ENCODE measurements at regions of chr19 and their contacts with region 1.

Region 1: GRCh38 chr19:17947815-17948513 is 15.1 kb downstream of the CCDC124 start:
- DNase-seq: peak; percentile 91 to 99 (median 95)
- ATAC-seq: peak; percentile 87
- H3K4me3 ChIP-seq: peak overlapping the region; percentile 41
- H3K4me3 Mint-ChIP-seq: peak overlapping the region; percentile 68 to 88 (median 82)
- H3K27ac ChIP-seq: peak overlapping the region; percentile 99
- H3K27ac Mint-ChIP-seq: peak overlapping the region in 7 of 9 donors; percentile 48 to 96 (median 87)
- H3K4me1 ChIP-seq: peaks cover 37 to 50% of the 10 kb centered on the region in 2 donors
- H3K4me1 Mint-ChIP-seq: peaks cover 22 to 55% (median 43%) of the 10 kb centered on the region in 7 donors
- H3K27me3 ChIP-seq: peaks cover 18 to 28% of the 10 kb centered on the region in 2 donors
- H3K27me3 Mint-ChIP-seq: peaks cover 27 to 43% (median 30%) of the 10 kb centered on the region in 5 donors

Region 2: GRCh38 chr19:17967257-17968051 is 19.5 kb after region 1 on chr19:
- CTCF ChIA-PET with region 1: no interaction called
- POLR2A ChIA-PET with region 1: no interaction called
- intact Hi-C with region 1: loop called in 1 of 2 experiments (anchors 2 kb)
- DNase-seq: no peak
- ATAC-seq: no peak
- H3K4me3 ChIP-seq: no peak overlapping the region
- H3K4me3 Mint-ChIP-seq: peak overlapping the region in 8 of 10 donors; percentile 38 to 81 (median 65)
- H3K27ac ChIP-seq: no peak overlapping the region
- H3K27ac Mint-ChIP-seq: peak overlapping the region in 1 of 9 donors; percentile 43
- H3K4me1 ChIP-seq: peaks cover 0 to 5% of the 10 kb centered on the region in 2 donors
- H3K4me1 Mint-ChIP-seq: peaks cover 0 to 11% (median 8%) of the 10 kb centered on the region in 7 donors
- H3K27me3 ChIP-seq: peaks cover 0 to 13% of the 10 kb centered on the region in 2 donors
- H3K27me3 Mint-ChIP-seq: peaks cover 32 to 48% (median 38%) of the 10 kb centered on the region in 5 donors

Region 3: GRCh38 chr19:18879579-18880373 is 931.8 kb after region 1 on chr19:
- CTCF ChIA-PET with region 1: no interaction called
- POLR2A ChIA-PET with region 1: no interaction called
- intact Hi-C with region 1: no loop called
- DNase-seq: peak in 3 of 9 donors; percentile 9 to 45 (median 19)
- ATAC-seq: peak; percentile 67
- H3K4me3 ChIP-seq: no peak overlapping the region
- H3K4me3 Mint-ChIP-seq: no peak overlapping the region
- H3K27ac ChIP-seq: no peak overlapping the region
- H3K27ac Mint-ChIP-seq: no peak overlapping the region
- H3K4me1 ChIP-seq: no peaks in the 10 kb centered on the region
- H3K4me1 Mint-ChIP-seq: peaks cover 0 to 3% (median 0%) of the 10 kb centered on the region in 7 donors
- H3K27me3 ChIP-seq: no peaks in the 10 kb centered on the region
- H3K27me3 Mint-ChIP-seq: no peaks in the 10 kb centered on the region